HCT116 (cell line): ENCODE measurements at regions of chr10 and their contacts with region 1.

Region 1: GRCh38 chr10:3757638-3758490 is 27.1 kb downstream of the KLF6 start:
- DNase-seq: no peak
- ATAC-seq: no peak
- H3K4me3 ChIP-seq: no peak overlapping the region
- H3K27ac ChIP-seq: no peak overlapping the region
- H3K4me1 ChIP-seq: peaks cover 36 to 70% of the 10 kb centered on the region in 2 experiments
- H3K27me3 ChIP-seq: no peaks in the 10 kb centered on the region
- CTCF ChIP-seq: no peak
- POLR2A ChIP-seq: no peak
- RAD21 ChIP-seq: no peak

Region 2: GRCh38 chr10:3095373-3096139 is 662.3 kb before region 1 on chr10:
- CTCF ChIA-PET with region 1: no interaction called
- POLR2A ChIA-PET with region 1: no interaction called
- RAD21 ChIA-PET with region 1: no interaction called
- intact Hi-C with region 1: loop called (anchors 10 kb)
- DNase-seq: peak; percentile 97
- ATAC-seq: peak; percentile 71
- H3K4me3 ChIP-seq: peak overlapping the region in 1 of 2 experiments; percentile 15; a peak in 3 of 4 replicates
- H3K27ac ChIP-seq: peak overlapping the region; percentile 90
- H3K4me1 ChIP-seq: peaks cover 59 to 70% of the 10 kb centered on the region in 2 experiments
- H3K27me3 ChIP-seq: no peaks in the 10 kb centered on the region
- CTCF ChIP-seq: no peak
- POLR2A ChIP-seq: no peak
- RAD21 ChIP-seq: peak; percentile 24; the same call in 1 of the 2 replicates

Region 3: GRCh38 chr10:3467052-3467951 is 290.6 kb before region 1 on chr10:
- CTCF ChIA-PET with region 1: no interaction called
- POLR2A ChIA-PET with region 1: no interaction called
- RAD21 ChIA-PET with region 1: no interaction called
- intact Hi-C with region 1: loop called (anchors 10 kb)
- DNase-seq: peak; percentile 93
- ATAC-seq: peak; percentile 83
- H3K4me3 ChIP-seq: peak overlapping the region; percentile 35 to 41
- H3K27ac ChIP-seq: peak overlapping the region; percentile 81
- H3K4me1 ChIP-seq: peaks cover 29 to 33% of the 10 kb centered on the region in 2 experiments
- H3K27me3 ChIP-seq: no peaks in the 10 kb centered on the region
- CTCF ChIP-seq: peak; percentile 75 to 98 (median 88)
- POLR2A ChIP-seq: no peak
- RAD21 ChIP-seq: peak; percentile 86

Region 4: GRCh38 chr10:3482200-3483138 is 275.4 kb before region 1 on chr10:
- CTCF ChIA-PET with region 1: no interaction called
- POLR2A ChIA-PET with region 1: no interaction called
- RAD21 ChIA-PET with region 1: no interaction called
- intact Hi-C with region 1: loop called (anchors 10 kb)
- DNase-seq: peak; percentile 88
- ATAC-seq: peak; percentile 86
- H3K4me3 ChIP-seq: peak overlapping the region in 1 of 2 experiments; percentile 40; a peak in 2 of 4 replicates
- H3K27ac ChIP-seq: no peak overlapping the region
- H3K4me1 ChIP-seq: peaks cover 20 to 37% of the 10 kb centered on the region in 2 experiments
- H3K27me3 ChIP-seq: no peaks in the 10 kb centered on the region
- CTCF ChIP-seq: no peak
- POLR2A ChIP-seq: no peak
- RAD21 ChIP-seq: peak; percentile 18; the same call in 1 of the 2 replicates

Region 5: DNA sequence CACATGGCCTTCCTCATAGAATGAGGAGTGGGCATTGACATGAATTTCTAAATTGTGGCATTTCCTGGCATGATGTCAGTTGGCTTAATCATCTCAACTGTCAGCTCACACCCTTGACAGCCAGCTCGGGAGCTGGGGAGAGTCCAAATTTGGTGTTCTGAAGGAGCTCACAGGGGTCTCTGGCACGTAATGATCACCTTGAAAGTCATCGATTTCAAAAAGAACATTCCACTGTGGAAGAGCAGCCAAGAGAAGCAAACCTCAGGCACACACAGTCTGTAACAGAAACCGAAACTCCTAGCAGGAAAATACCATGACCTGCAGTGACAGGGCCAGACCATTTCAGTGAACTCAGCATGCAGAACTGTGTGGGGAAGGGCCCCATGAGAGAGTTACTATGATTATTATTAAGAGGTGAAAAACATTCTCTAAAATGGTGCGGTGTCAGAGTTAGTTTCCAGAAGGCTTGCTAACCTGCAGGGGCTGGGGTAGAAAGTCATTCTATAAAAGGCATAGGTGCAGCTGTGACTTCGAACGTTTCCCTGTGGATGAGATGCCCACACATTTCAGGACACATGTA is 53.5 kb after region 1 on chr10:
- CTCF ChIA-PET with region 1: no interaction called
- POLR2A ChIA-PET with region 1: no interaction called
- RAD21 ChIA-PET with region 1: no interaction called
- intact Hi-C with region 1: loop called (anchors 1 kb)
- DNase-seq: no peak
- ATAC-seq: no peak
- H3K4me3 ChIP-seq: peak overlapping the region in 1 of 2 experiments; percentile 37; a peak in 2 of 4 replicates
- H3K27ac ChIP-seq: peak overlapping the region; percentile 78
- H3K4me1 ChIP-seq: peaks cover 43 to 68% of the 10 kb centered on the region in 2 experiments
- H3K27me3 ChIP-seq: no peaks in the 10 kb centered on the region
- CTCF ChIP-seq: no peak
- POLR2A ChIP-seq: no peak
- RAD21 ChIP-seq: no peak

Region 6: DNA sequence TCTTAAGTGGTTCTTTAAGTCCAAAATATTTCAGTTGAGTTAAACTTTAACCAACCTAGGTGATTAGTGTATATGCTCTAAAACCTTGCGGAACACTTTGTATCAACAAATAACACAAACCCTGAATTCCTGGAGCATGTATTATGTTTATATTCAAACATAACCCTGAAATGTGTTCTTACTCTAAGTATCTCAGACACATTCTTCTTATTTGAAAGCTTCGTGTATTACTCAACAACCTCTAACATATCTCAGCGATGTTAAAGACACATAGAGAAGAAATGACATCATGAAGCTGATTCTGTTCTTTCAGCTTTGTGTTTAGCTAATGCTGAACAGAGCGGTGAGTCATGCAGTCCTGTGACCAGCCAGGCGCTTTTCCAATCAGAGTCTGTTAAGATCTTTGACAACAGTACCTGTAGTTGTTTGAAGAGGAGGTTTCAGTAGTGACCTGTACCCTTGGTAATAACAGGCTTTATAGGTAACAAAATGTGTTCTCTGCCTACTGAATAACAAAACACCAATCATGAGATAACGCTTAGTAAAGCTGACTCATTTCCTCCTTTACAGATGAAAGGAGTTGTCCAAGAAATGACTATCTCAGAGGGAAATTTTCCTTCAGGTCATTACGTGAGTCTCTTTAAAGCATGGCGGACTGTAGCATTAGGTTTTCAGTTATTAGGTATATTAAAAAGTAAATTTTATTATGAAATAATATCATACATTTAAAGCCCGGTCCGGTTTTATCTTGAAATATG is 94.5 kb after region 1 on chr10:
- CTCF ChIA-PET with region 1: no interaction called
- POLR2A ChIA-PET with region 1: no interaction called
- RAD21 ChIA-PET with region 1: no interaction called
- intact Hi-C with region 1: loop called (anchors 5 kb)
- DNase-seq: peak; percentile 99
- ATAC-seq: peak; percentile 95
- H3K4me3 ChIP-seq: peak overlapping the region in 1 of 2 experiments; percentile 23; a peak in 2 of 4 replicates
- H3K27ac ChIP-seq: peak overlapping the region; percentile 90
- H3K4me1 ChIP-seq: peaks cover 37 to 61% of the 10 kb centered on the region in 2 experiments
- H3K27me3 ChIP-seq: no peaks in the 10 kb centered on the region
- CTCF ChIP-seq: no peak
- POLR2A ChIP-seq: no peak
- RAD21 ChIP-seq: peak; percentile 47